B cell (primary cell): ENCODE measurements at regions of chr5 and their contacts with region 1.

Region 1: GRCh38 chr5:83701886-83702285 is 18.8 kb downstream of the HAPLN1 start:
- DNase-seq: no peak
- ATAC-seq: no peak
- H3K4me3 ChIP-seq: no peak overlapping the region
- H3K4me3 Mint-ChIP-seq: no peak overlapping the region
- H3K27ac ChIP-seq: no peak overlapping the region
- H3K27ac Mint-ChIP-seq: no peak overlapping the region
- H3K4me1 ChIP-seq: no peaks in the 10 kb centered on the region
- H3K4me1 Mint-ChIP-seq: no peaks in the 10 kb centered on the region
- H3K27me3 ChIP-seq: no peaks in the 10 kb centered on the region
- H3K27me3 Mint-ChIP-seq: peaks cover 10% of the 10 kb centered on the region
- CTCF ChIP-seq: no peak

Region 2: GRCh38 chr5:83577036-83577636 is 124.8 kb before region 1 on chr5:
- CTCF ChIA-PET with region 1: no interaction called
- POLR2A ChIA-PET with region 1: no interaction called
- intact Hi-C with region 1: no loop called
- DNase-seq: no peak
- ATAC-seq: no peak
- H3K4me3 ChIP-seq: no peak overlapping the region
- H3K4me3 Mint-ChIP-seq: no peak overlapping the region
- H3K27ac ChIP-seq: no peak overlapping the region
- H3K27ac Mint-ChIP-seq: no peak overlapping the region
- H3K4me1 ChIP-seq: no peaks in the 10 kb centered on the region
- H3K4me1 Mint-ChIP-seq: no peaks in the 10 kb centered on the region
- H3K27me3 ChIP-seq: no peaks in the 10 kb centered on the region
- H3K27me3 Mint-ChIP-seq: no peaks in the 10 kb centered on the region
- CTCF ChIP-seq: no peak

Region 3: GRCh38 chr5:83712001-83712601 is 10.2 kb after region 1 on chr5:
- CTCF ChIA-PET with region 1: interaction called, 18 read pairs
- POLR2A ChIA-PET with region 1: no interaction called
- intact Hi-C with region 1: no loop called
- DNase-seq: peak; percentile 44
- ATAC-seq: peak; percentile 41
- H3K4me3 ChIP-seq: no peak overlapping the region
- H3K4me3 Mint-ChIP-seq: no peak overlapping the region
- H3K27ac ChIP-seq: no peak overlapping the region
- H3K27ac Mint-ChIP-seq: no peak overlapping the region
- H3K4me1 ChIP-seq: no peaks in the 10 kb centered on the region
- H3K4me1 Mint-ChIP-seq: no peaks in the 10 kb centered on the region
- H3K27me3 ChIP-seq: no peaks in the 10 kb centered on the region
- H3K27me3 Mint-ChIP-seq: peaks cover 14% of the 10 kb centered on the region
- CTCF ChIP-seq: peak; percentile 98

Region 4: DNA sequence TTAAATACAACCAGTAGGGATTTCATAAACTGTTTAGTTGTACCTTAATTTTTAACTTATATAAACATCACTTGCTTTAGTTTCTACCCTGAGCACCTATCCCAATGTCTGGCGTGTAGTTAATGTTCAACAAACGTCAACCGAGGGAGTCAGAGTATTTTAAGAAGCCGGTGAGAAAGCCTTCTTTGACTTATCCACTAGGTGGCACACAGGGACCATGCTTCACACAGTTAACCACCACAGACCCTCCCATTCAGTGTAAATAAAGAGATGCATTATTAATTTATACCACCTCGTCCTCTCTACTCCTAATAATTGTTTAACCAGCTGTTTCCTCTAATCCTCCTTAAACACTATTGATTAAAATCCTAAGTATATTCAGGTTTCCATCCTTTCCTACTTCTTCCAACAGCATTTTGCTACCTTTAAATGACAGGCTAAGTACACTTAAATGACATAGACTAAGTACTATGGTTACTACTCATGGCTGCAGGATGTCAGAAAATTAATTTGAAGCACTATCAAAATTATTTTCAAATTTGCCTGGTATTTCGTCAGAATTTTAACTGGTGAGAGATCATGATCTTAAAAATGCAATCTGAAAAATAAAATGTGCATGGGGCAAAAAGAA is 16.4 kb after region 1 on chr5:
- CTCF ChIA-PET with region 1: interaction called, 10 read pairs
- POLR2A ChIA-PET with region 1: no interaction called
- intact Hi-C with region 1: no loop called
- DNase-seq: peak; percentile 50
- ATAC-seq: peak; percentile 36
- H3K4me3 ChIP-seq: no peak overlapping the region
- H3K4me3 Mint-ChIP-seq: no peak overlapping the region
- H3K27ac ChIP-seq: no peak overlapping the region
- H3K27ac Mint-ChIP-seq: no peak overlapping the region
- H3K4me1 ChIP-seq: peaks cover 4 to 9% of the 10 kb centered on the region in 2 donors
- H3K4me1 Mint-ChIP-seq: peaks cover 15% of the 10 kb centered on the region
- H3K27me3 ChIP-seq: peaks cover 0 to 14% (median 2%) of the 10 kb centered on the region in 4 experiments
- H3K27me3 Mint-ChIP-seq: peaks cover 54% of the 10 kb centered on the region
- CTCF ChIP-seq: peak; percentile 76